ENCODE measurements at regions of chr10 and their contacts with region 1.

Region 1: DNA sequence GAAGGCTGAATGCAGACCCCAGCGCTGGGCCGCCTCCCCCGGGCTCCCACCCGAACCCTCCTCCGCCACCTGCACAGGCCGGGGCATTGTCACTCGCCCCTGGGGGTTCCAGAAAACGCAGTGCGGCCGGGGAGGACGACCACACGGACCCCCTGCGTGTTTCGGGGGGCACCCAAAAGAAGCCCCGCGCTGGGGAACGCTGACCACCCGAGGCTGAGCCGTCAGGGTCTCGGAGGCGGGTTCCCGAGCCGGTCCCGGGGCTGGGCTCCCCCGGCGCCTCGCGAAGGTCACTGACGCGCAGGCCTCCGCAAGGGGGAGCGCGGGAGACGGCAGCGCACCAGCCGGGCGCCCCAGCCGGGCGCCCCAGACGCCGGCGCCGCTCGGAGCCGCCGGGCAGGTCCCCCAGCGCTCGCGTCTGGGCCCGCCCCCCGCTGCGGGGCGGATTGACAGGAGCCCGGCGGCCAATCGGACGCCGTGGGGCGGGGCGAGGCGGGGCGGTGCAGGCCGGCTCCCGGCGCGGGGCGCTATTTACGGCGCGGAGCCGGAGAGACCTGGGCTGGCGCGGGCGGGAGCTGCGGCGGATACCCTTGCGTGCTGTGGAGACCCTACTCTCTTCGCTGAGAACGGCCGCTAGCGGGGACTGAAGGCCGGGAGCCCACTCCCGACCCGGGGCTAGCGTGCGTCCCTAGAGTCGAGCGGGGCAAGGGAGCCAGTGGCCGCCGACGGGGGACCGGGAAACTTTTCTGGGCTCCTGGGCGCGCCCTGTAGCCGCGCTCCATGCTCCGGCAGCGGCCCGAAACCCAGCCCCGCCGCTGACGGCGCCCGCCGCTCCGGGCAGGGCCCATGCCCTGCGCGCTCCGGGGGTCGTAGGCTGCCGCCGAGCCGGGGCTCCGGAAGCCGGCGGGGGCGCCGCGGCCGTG is at the start of gene BAMBI:
- DNase-seq: peak; percentile 55
- H3K4me3 ChIP-seq: peak within 1 kb of the TSS; percentile 77
- CTCF ChIP-seq: peak; percentile 40

Region 2: GRCh38 chr10:29304264-29305030 is 627.2 kb after region 1 on chr10:
- in situ Hi-C with region 1: loop called (anchors 25 kb)
- DNase-seq: peak; percentile 81
- H3K4me3 ChIP-seq: no peak overlapping the region
- CTCF ChIP-seq: peak; percentile 75

Measured in astrocyte of the cerebellum (primary cell).